AG04449 (cell line): ENCODE measurements at regions of chr2 and their contacts with region 1.

Region 1: DNA sequence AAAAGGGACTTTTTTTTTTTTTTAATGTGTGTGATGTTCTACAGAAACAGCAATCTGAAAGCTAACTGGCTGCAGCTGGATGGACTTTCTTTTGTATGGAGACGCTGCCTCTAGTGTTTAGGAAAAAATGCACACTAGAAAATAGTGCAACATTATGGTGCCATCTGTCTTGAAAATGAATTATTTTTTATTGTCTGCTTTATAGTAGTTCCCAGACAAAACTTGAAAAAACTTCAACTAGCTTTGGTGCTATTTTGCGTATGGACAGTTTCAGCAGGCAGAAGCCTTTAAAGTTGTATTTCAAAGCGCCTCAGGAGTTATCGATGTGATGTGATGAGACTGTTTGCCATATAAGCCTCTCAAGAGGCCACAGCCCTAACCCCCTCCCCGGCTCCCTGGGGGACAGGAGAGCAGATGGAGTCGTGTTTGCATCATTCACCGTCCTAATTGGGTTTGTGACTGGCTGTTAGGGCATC is 86.9 kb downstream of the LTBP1 start:
- DNase-seq: no peak
- H3K4me3 ChIP-seq: peak overlapping the region; percentile 52
- CTCF ChIP-seq: peak; percentile 46

Region 2: DNA sequence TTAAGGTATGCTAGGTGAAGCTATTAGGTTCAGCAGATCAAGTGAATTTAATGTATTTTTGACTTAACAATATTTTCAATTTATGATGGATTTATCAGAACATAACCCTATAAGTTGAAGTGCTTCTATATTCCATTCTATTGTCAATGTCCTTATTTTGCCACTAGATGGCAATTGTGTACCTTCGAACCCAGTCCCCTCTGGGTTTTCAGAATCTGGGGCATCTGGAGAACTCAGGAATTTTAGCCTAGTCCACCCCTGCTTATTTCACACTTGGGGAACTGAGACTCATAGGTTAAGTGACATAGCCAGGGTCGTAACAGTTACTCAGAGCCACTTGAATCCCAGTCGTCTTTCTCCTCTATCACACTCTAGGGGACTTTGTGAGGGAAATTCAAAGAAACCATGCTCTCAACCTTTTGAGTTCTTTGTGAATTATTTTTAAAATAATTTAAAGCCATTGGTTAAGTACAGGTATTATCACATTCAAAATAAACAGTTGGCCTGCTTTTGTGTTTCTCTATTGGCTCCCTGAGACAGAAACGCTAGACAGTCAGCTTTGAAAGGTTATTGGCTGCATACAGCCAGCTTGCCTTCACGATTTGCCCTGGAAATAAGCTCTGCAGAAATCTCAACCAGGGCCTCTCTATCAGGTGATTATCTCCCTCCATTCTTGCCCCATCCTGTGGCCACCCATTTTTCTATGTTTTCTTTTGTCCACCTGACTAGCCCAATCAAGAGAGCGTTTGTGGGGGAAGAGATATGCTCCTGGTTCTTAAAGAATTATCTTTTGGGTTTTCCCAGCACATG is 260.8 kb before region 1 on chr2:
- CTCF ChIA-PET with region 1: interaction called, 139 read pairs
- POLR2A ChIA-PET with region 1: no interaction called
- DNase-seq: peak; percentile 21
- H3K4me3 ChIP-seq: no peak overlapping the region
- CTCF ChIP-seq: peak; percentile 44

Region 3: DNA sequence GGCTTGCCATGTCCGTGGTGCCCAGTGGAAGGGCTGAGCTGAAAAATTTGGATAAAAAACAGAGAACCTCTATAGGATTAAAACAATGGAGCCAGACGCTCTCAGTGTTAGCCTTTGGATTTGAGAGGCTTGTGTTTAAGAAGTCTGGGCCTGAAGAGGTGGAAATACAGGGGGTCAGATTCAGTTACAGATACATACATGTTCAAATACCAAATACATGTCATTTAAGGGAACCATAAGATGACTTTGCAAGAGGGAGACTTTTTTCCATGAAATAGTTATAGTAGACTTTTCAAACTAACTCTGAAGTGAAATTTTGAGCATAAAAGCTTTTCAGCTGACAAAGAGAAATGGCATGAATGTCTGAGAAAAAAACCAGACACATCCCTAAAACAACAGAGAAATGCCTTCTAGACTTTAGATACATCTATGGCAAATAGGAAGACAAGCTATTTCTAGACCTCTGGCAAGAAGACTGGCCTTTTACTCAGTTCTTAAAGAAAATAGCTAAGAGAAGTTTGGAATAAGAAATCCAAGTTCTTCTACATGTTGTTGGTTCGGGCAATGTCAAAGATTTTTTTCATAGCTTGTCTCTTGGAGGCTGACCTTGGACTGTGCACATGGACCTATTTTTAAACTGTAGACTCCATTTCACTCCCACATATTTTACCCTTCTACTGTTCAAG is 26.0 kb after region 1 on chr2:
- CTCF ChIA-PET with region 1: interaction called, 12 read pairs
- POLR2A ChIA-PET with region 1: no interaction called
- DNase-seq: no peak
- H3K4me3 ChIP-seq: no peak overlapping the region
- CTCF ChIP-seq: no peak

Region 4: DNA sequence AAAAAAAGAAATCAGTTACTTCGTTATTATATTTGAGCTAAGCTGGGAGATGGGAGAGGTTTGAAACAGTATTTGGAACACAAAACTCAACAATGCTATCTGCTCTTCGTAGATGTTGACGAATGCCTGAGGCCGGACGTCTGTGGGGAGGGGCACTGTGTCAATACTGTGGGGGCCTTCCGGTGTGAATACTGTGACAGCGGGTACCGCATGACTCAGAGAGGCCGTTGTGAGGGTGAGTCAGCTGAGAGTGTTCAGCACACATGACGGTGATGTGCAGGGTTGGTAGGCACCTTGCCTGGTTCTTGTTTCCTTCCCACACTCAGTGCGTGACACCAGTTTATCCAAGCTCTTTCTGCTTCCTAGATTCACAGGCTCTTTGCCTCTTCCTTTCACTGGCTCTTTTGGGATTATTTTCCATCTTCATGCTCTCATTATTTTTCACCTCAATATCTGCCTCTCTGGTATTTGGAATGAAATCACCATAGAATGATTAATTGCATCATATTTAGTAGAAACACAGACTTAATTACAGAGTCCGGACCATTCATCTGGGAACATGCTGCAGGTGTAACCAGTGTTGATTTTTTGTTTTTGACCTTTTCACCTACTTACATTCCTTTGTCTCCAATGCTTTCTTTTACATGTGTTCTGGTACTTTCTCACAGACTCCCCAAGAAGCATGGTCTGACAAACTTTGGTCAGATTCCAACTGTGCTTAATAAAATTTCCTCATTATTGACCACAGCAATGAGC is 242.2 kb after region 1 on chr2:
- CTCF ChIA-PET with region 1: interaction called, 10 read pairs
- POLR2A ChIA-PET with region 1: no interaction called
- DNase-seq: no peak
- H3K4me3 ChIP-seq: no peak overlapping the region
- CTCF ChIP-seq: no peak

Region 5: DNA sequence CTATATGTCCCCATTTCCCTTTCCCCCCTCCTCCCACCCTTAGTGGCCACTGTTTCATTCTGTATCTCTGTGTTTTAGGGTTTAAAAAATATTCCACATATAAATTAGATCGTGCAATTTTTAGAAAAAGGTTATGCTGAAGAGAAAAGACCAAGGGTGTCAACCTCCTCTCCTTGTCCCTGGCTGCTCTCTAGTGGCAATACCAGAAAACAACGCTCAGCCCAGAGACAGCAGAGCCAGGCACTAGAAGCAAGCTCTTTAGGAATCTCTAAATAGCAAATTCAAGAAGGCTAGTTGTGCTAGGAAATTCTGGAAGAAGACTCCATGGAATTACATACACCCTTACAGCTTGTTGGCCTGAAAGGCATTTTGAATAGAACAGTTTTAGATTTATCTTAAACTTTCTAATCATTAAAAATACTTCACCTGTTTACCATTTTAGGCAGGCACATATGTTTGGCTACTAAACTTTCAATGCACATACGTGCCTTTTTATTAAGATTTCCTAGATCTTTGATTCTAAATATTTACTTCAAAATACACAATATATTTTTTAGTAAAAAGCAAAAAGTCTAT is 407.7 kb after region 1 on chr2:
- CTCF ChIA-PET with region 1: interaction called, 24 read pairs
- POLR2A ChIA-PET with region 1: no interaction called
- DNase-seq: no peak
- H3K4me3 ChIP-seq: no peak overlapping the region
- CTCF ChIP-seq: peak; percentile 80